SK-N-SH (cell line): ENCODE measurements at regions of chr15 and their contacts with region 1.

Region 1: DNA sequence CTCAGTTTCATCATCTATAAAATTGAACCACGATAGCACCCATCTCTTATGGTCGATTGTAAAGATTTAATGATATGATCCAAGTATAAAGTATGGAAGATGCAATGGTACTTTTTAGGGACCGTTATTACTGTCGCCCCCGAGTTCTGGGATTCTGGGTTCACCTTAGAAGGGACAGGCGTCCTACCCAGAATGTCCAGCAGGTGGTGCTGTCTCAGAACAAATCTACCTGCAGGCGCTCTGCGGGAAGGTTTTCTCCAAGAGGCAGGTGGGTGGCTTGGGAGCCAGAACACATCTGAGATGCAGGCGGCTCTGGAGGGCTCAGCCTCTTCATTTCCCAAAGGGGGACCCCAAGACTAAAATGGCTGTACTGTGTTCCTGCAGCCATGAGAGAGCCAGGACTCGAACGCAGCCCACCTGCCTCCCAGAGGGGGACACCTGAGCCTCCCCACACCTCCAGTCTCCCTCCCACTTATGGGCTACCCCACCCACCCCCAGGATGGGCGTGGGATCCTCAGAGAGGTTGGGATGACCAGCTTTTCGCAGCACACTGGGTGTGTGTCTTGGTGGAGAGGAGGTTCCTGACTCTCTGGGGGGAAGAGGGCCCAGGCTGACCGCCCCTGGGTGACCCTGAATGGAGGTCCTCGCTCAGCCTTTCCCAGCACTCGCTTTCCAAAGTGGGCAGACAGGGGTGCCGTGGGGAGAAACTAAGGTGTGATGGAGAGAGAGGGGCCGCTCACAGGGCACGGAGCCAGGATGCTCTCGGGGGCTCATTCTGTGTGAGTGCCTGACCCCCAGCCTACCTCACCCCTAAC is 28.1 kb upstream of the CORO2B start:
- DNase-seq: peak; percentile 74
- H3K4me3 ChIP-seq: peak overlapping the region in 1 of 2 experiments; percentile 34; a peak in 1 of 4 replicates
- H3K27ac ChIP-seq: no peak overlapping the region
- H3K4me1 ChIP-seq: peaks cover 4 to 5% of the 10 kb centered on the region in 2 experiments; a peak in 3 of 4 replicates
- H3K27me3 ChIP-seq: no peaks in the 10 kb centered on the region
- CTCF ChIP-seq: peak; percentile 92
- EP300 ChIP-seq: no peak
- RAD21 ChIP-seq: peak; percentile 80

Region 2: DNA sequence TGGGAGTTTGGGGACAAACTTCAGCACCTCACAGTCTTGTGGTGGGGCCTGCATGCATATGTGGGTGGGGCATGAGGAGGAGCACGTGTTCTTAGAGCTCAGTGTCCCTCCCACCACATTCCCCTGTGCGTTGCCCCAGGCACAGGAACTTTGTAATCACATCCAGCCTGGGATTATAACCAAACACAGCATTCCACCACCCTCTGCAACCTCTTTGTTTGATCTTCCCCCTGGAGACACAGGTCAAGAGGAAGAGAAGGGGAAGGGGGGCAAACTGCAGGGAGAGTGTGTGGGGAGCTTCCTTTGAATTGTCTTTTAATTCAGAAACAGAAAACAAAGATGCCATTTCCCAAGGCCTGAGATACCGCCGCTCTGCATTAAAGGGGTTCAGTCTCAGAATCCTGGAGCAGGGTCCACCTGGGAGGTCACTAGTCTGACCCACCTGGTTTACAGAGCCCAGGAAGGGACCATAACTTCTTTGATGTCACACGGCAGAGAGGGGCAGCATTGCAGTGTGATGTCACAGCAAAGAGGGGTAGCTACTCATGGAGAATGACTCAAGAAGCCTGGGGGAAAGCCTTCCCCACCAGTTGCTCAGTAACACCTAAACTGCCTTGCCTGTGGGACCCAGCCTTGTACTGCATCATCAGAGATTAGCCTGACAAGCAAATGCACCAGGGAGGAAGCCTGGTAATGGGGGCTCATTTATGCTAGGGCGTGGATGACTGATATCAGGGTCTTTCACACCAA is 604.6 kb before region 1 on chr15:
- CTCF ChIA-PET with region 1: no interaction called
- POLR2A ChIA-PET with region 1: no interaction called
- DNase-seq: no peak
- H3K4me3 ChIP-seq: no peak overlapping the region
- H3K27ac ChIP-seq: no peak overlapping the region
- H3K4me1 ChIP-seq: no peaks in the 10 kb centered on the region; a peak in 1 of 4 replicates
- H3K27me3 ChIP-seq: no peaks in the 10 kb centered on the region; the same call in 1 of the 2 replicates
- CTCF ChIP-seq: no peak
- EP300 ChIP-seq: no peak
- RAD21 ChIP-seq: no peak

Region 3: DNA sequence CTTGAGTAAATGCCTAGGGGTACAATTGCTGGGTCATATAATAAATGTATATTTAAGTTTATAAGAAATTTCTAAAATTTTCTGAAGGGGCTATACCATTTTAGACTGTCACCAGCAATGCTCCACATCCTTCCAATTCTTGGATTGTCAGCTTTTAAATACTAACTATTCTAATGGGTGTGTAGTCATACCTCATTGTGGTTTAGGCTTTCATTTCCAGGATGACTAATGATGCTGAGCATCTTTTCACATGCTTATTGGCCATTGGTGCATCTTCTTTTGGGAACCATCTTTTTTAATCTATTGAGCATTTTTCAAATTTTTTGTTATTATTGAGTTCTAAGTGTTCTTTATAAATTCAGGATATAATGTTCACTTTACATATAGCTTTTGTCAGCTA is 24.4 kb before region 1 on chr15:
- CTCF ChIA-PET with region 1: interaction called, 30 read pairs
- POLR2A ChIA-PET with region 1: no interaction called
- DNase-seq: no peak
- H3K4me3 ChIP-seq: no peak overlapping the region
- H3K27ac ChIP-seq: 0 out of 4 replicates have a peak overlapping the region, but pooled peaks of 1 of the 2 experiments have one; percentile 20
- H3K4me1 ChIP-seq: peaks cover 0 to 10% of the 10 kb centered on the region in 2 experiments; a peak in 2 of 4 replicates
- H3K27me3 ChIP-seq: no peaks in the 10 kb centered on the region
- CTCF ChIP-seq: no peak
- EP300 ChIP-seq: no peak
- RAD21 ChIP-seq: no peak

Region 4: GRCh38 chr15:68566377-68566954 is 15.8 kb after region 1 on chr15:
- CTCF ChIA-PET with region 1: interaction called, 23 read pairs
- POLR2A ChIA-PET with region 1: no interaction called
- DNase-seq: no peak
- H3K4me3 ChIP-seq: no peak overlapping the region
- H3K27ac ChIP-seq: no peak overlapping the region
- H3K4me1 ChIP-seq: no peaks in the 10 kb centered on the region
- H3K27me3 ChIP-seq: no peaks in the 10 kb centered on the region
- CTCF ChIP-seq: no peak
- EP300 ChIP-seq: no peak
- RAD21 ChIP-seq: no peak

Region 5: DNA sequence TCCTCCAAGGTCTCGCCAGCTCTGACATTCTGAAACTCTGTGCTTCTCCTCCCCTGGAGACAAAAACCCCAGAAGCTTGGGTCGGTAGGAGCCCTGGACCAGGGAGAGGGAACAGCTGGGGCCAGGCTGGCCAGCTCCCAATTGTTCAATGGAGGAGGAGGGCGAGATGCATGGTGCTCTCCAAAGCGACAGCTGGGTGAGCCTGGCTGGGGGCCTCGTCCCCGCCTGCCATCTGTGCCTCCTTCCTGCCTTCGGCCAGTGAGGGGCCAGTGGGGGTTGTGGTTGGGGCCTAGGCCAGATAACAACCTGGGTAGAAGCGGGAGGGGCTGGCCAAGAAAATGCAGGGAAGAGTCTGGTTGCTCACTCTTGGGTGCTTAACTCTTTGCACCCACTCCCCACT is 107.5 kb after region 1 on chr15:
- CTCF ChIA-PET with region 1: interaction called, 464 read pairs
- POLR2A ChIA-PET with region 1: no interaction called
- DNase-seq: no peak
- H3K4me3 ChIP-seq: no peak overlapping the region
- H3K27ac ChIP-seq: no peak overlapping the region
- H3K4me1 ChIP-seq: peaks cover 0 to 2% of the 10 kb centered on the region in 2 experiments; a peak in 1 of 4 replicates
- H3K27me3 ChIP-seq: no peaks in the 10 kb centered on the region
- CTCF ChIP-seq: no peak
- EP300 ChIP-seq: no peak
- RAD21 ChIP-seq: no peak

Region 6: GRCh38 chr15:68885070-68885469 is 334.4 kb after region 1 on chr15:
- CTCF ChIA-PET with region 1: interaction called, 18 read pairs
- POLR2A ChIA-PET with region 1: no interaction called
- DNase-seq: no peak
- H3K4me3 ChIP-seq: no peak overlapping the region
- H3K27ac ChIP-seq: no peak overlapping the region
- H3K4me1 ChIP-seq: no peaks in the 10 kb centered on the region
- H3K27me3 ChIP-seq: no peaks in the 10 kb centered on the region; the same call in 1 of the 2 replicates
- CTCF ChIP-seq: no peak
- EP300 ChIP-seq: no peak
- RAD21 ChIP-seq: no peak

Region 7: DNA sequence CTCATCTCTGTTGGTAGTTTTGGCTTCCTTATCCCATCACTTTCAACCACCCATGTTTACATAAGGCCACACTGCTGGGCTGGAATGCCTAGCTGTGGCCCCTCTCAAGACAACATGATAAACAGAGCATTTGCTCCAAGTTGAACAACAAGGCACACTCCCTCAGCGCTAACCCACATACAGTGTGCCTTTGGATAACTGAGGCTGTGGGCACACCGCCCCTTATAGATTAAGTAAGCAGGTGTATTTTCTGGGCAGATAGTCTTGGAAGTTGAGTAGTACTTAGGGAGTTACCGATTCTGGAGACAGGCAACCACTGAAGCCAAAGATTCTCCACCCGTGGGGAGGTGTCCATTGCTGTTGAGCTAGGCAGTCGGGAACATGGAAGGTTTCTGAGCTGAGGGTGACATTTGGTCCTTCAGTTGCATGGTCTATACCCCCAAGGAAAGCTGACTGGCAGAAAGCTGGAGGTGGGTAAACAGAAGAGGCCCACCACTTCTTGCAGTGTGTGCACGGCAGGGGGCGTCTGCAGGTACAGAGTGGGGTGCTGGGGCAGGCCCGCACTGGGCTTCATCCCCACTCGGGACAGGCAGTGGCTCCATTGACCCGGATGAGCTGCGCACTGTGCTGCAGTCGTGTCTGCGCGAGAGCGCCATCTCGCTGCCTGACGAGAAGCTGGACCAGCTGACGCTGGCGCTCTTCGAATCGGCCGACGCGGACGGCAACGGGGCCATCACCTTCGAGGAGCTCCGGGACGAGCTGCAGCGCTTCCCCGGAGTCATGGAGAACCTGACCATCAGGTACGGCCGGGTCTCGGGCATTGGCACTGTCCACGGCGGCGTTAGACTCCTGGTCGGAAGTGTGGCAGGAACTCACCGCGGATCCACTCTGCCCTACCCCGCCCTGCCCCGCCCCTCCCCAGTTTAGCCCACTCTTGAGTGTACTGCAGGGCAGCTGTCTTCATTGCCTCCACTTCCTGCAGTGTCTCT is 480.6 kb after region 1 on chr15:
- CTCF ChIA-PET with region 1: interaction called, 10 read pairs
- POLR2A ChIA-PET with region 1: no interaction called
- DNase-seq: peak; percentile 83
- H3K4me3 ChIP-seq: peak overlapping the region; percentile 35 to 44; a peak in 2 of 4 replicates
- H3K27ac ChIP-seq: no peak overlapping the region
- H3K4me1 ChIP-seq: no peaks in the 10 kb centered on the region; a peak in 1 of 4 replicates
- H3K27me3 ChIP-seq: no peaks in the 10 kb centered on the region
- CTCF ChIP-seq: peak; percentile 49
- EP300 ChIP-seq: no peak
- RAD21 ChIP-seq: peak; percentile 60